Posterior vena cava (tissue), 2 donors: ENCODE measurements at regions of chr18 and their contacts with region 1.

Region 1: DNA sequence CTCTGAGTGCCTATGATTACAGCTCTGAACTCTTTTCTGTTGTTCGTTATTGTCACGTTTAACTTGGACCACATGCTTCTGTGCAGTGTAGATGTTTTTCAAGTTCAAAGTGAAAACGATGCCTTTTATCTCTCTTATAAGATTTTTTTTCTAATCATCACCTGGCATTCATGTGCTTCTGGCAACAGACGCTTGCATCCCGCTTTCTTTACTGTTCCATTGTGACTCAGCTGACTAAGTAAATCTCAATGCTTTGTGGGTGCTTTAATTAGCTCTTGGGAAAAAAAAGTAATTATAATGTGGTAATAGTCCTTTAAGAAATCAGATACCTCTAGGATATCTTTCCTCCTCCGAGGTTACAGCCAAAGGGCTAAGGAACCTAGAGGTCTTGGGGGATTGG is 31.2 kb upstream of the RMP24 start:
- DNase-seq: no peak

Region 2: DNA sequence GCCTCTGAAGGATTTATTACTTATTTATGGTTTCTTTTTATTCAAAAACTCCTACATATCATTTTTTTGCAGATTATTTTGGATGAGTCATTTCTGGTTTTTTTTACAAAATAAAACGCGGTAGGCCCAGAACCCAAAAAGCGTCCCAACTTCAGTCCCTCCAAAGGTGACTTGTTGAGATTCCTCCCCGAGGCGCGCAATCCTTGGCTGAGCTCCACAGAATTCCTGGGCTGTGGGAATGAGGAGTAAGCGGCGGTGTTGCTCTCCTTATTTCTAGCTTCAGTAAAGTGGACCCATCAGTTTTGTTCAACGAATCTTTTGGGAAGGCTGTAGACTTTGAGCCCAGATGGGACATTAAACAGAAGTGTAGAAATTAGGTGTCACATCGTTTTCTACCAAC is 35.9 kb before region 1 on chr18:
- intact Hi-C with region 1: no loop called
- DNase-seq: no peak

Region 3: GRCh38 chr18:35916103-35916502 is 25.2 kb before region 1 on chr18:
- intact Hi-C with region 1: loop called in 1 of 2 experiments (anchors 1 kb)
- DNase-seq: no peak